PC-3 (cell line): ENCODE measurements at regions of chr10 and their contacts with region 1.

Region 1: DNA sequence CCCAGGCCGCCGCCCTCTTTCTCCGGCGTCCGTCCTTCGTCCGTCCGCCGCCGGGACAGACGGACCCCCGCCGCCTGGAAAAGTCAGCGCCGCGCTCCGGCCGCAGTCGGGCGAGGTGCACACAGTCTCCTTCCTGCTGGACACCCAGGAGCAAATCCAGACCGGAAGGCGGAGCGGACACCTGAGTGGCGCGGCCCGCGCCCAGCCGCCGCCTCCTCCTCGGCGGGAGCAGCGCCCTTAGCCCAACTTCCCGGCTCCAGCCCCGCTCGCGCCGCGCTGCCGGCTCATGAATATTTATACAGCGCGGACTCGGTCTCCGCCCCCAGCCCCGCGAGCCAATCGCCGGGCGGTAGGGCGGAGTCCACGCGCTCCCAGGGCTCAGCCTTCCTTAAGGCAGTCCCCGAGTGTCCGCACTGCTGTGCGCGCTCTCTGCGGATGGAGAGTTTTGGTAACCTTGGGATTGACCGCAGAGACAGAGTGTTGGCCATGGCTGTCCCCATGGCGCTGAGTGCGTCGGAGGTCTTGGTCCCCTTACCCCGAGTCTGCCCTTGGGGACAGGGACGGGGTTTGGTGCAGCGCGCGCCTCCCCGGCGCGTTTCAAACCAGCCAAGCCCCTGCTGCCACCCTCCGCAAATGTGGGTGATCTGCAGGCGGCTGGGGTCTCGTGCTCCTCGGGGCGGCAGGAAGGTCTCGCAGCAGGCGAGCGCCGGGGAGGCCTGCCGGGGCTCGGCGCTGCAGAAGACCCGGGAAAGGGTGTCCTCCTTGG is at the start of gene FZD8:
- DNase-seq: peak; percentile 100
- ATAC-seq: peak; percentile 73
- H3K4me3 ChIP-seq: peak within 1 kb of the TSS; percentile 80
- H3K27ac ChIP-seq: peak within 1 kb of the TSS; percentile 62
- H3K4me1 ChIP-seq: peaks cover 30% of the 10 kb centered on the region
- H3K27me3 ChIP-seq: no peaks in the 10 kb centered on the region
- CTCF ChIP-seq: peak; percentile 60; the same call in 1 of the 2 replicates
- total RNA-seq, gene FZD8: 275 and 375 TPM in 2 replicates

Region 2: GRCh38 chr10:35598384-35598783 is 43.8 kb before region 1 on chr10:
- CTCF ChIA-PET with region 1: no interaction called
- POLR2A ChIA-PET with region 1: no interaction called
- intact Hi-C with region 1: no loop called
- DNase-seq: peak; percentile 75
- ATAC-seq: peak; percentile 89
- H3K4me3 ChIP-seq: no peak overlapping the region
- H3K27ac ChIP-seq: no peak overlapping the region
- H3K4me1 ChIP-seq: no peaks in the 10 kb centered on the region
- H3K27me3 ChIP-seq: no peaks in the 10 kb centered on the region
- CTCF ChIP-seq: peak; percentile 99

Region 3: DNA sequence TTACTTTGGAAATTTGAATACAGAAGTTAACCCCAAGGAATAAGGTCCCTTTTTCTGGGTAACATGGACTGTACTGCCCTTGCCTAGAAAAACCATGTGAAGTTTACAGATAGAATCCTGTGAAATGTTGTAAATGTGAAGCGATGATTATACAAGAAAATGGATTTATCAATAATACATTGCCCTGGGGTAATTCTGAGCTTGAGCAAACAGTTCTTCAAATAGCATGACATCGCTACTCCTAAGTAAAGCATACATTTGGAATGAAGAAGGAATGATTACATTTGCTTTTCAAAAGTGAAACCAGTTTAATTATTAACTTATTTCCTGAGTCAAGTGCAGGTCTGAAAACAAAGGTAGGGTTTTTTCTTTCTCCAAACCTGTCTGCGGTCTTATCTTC is 43.2 kb after region 1 on chr10:
- CTCF ChIA-PET with region 1: no interaction called
- POLR2A ChIA-PET with region 1: no interaction called
- intact Hi-C with region 1: loop called (anchors 1 kb)
- DNase-seq: peak; percentile 91
- ATAC-seq: peak; percentile 85
- H3K4me3 ChIP-seq: peak overlapping the region; percentile 47
- H3K27ac ChIP-seq: peak overlapping the region; percentile 11
- H3K4me1 ChIP-seq: peaks cover 16% of the 10 kb centered on the region
- H3K27me3 ChIP-seq: no peaks in the 10 kb centered on the region
- CTCF ChIP-seq: no peak

Region 4: GRCh38 chr10:35739998-35740397 is 97.8 kb after region 1 on chr10:
- CTCF ChIA-PET with region 1: no interaction called
- POLR2A ChIA-PET with region 1: no interaction called
- intact Hi-C with region 1: no loop called
- DNase-seq: peak; percentile 79
- ATAC-seq: peak; percentile 93
- H3K4me3 ChIP-seq: no peak overlapping the region
- H3K27ac ChIP-seq: no peak overlapping the region
- H3K4me1 ChIP-seq: no peaks in the 10 kb centered on the region; the same call in 1 of the 2 replicates
- H3K27me3 ChIP-seq: no peaks in the 10 kb centered on the region
- CTCF ChIP-seq: no peak

Region 5: GRCh38 chr10:35889971-35890677 is 247.9 kb after region 1 on chr10:
- CTCF ChIA-PET with region 1: no interaction called
- POLR2A ChIA-PET with region 1: no interaction called
- intact Hi-C with region 1: loop called (anchors 1 kb)
- DNase-seq: peak; percentile 74
- ATAC-seq: peak; percentile 90
- H3K4me3 ChIP-seq: no peak overlapping the region
- H3K27ac ChIP-seq: peak overlapping the region; percentile 38
- H3K4me1 ChIP-seq: peaks cover 25% of the 10 kb centered on the region
- H3K27me3 ChIP-seq: no peaks in the 10 kb centered on the region
- CTCF ChIP-seq: no peak

Region 6: GRCh38 chr10:36023939-36024338 is 381.7 kb after region 1 on chr10:
- CTCF ChIA-PET with region 1: no interaction called
- POLR2A ChIA-PET with region 1: no interaction called
- intact Hi-C with region 1: loop called (anchors 2 kb)
- DNase-seq: peak; percentile 100
- ATAC-seq: peak; percentile 98
- H3K4me3 ChIP-seq: no peak overlapping the region
- H3K27ac ChIP-seq: peak overlapping the region; percentile 69
- H3K4me1 ChIP-seq: peaks cover 15% of the 10 kb centered on the region
- H3K27me3 ChIP-seq: no peaks in the 10 kb centered on the region
- CTCF ChIP-seq: no peak

Region 7: DNA sequence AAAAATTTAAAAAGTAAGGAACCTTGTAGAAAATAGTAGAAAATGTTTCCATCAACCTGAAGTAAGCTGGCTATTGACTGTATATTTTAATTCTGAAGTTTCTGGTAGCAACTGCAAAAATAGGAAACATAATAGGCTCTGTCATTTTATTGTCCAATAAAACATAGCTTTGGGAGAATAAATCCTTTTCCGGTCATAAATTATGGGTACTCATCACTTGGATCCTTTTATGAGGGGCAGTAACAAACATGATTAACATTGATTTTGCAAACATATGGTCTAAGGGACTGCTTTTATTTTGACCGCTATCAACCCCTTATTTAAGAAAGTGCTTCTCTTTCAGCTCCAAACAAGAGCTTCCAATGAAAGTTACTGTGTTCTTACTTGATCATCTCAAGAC is 987.3 kb after region 1 on chr10:
- CTCF ChIA-PET with region 1: no interaction called
- POLR2A ChIA-PET with region 1: no interaction called
- intact Hi-C with region 1: loop called (anchors 1 kb)
- DNase-seq: peak; percentile 76
- ATAC-seq: peak; percentile 71
- H3K4me3 ChIP-seq: no peak overlapping the region
- H3K27ac ChIP-seq: peak overlapping the region; percentile 81
- H3K4me1 ChIP-seq: peaks cover 24% of the 10 kb centered on the region
- H3K27me3 ChIP-seq: no peaks in the 10 kb centered on the region
- CTCF ChIP-seq: no peak